Naive thymus-derived CD4-positive, alpha-beta T cell (primary cell): ENCODE measurements at regions of chr2 and their contacts with region 1.

Region 1: DNA sequence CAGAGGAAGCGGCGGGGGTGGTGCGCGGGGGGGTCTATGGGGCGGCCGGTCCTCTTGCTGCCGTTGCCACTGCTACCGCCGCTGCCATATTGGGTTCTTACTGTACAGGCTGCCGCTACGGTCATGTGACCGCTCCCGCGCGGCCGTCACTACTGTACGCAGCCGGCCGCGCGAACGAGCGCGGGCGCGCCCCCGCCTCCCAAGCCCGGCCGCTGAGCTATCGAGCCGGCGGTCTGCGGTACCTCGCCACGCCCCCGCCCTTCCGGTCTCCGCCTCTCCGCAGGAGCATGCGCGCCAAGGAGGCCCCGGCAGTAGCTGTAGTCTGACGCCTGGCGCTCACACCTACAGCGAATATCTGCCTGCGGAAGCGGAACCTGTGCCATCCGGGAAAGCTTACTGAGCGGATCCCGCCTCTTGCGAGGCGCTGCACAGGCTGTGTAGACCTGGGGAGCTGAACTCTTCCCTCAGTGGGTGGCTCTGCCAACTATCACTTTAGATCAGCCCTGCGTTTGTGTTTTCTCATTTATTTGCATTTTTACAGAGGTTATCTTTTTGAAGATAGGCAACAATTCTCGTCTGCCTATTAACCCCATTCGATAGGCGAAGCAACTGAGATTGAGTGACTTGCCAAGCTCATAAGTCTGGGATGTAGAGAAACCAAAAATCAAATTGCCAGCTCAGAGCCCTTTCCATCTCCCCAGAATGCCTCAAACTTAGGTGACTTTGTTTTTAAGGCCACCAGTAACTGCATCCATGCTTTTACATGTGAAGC is at the start of gene ASXL2:
- DNase-seq: peak; percentile 95 to 98 (median 98)
- ATAC-seq: peak; percentile 95
- H3K4me3 ChIP-seq: peak within 1 kb of the TSS; percentile 94
- H3K4me3 Mint-ChIP-seq: peak within 1 kb of the TSS; percentile 91 to 98 (median 97)
- H3K27ac ChIP-seq: peak within 1 kb of the TSS; percentile 99
- H3K27ac Mint-ChIP-seq: peak within 1 kb of the TSS; percentile 93 to 99 (median 99)
- H3K4me1 ChIP-seq: peaks cover 16 to 21% of the 10 kb centered on the region in 2 donors
- H3K4me1 Mint-ChIP-seq: peaks cover 31 to 50% (median 40%) of the 10 kb centered on the region in 7 donors
- H3K27me3 ChIP-seq: no peaks in the 10 kb centered on the region
- H3K27me3 Mint-ChIP-seq: no peaks in the 10 kb centered on the region
- total RNA-seq, gene ASXL2: 29.2 to 62.1 (median 48.5) TPM

Region 2: GRCh38 chr2:24971536-24972314 is 906.8 kb before region 1 on chr2 and contains the start of gene DNAJC27:
- CTCF ChIA-PET with region 1: no interaction called
- POLR2A ChIA-PET with region 1: interaction called, 4 read pairs
- intact Hi-C with region 1: loop called in 1 of 2 experiments (anchors 1 kb)
- DNase-seq: peak; percentile 97 to 99 (median 99)
- ATAC-seq: peak; percentile 93
- H3K4me3 ChIP-seq: peak within 1 kb of the TSS; percentile 90
- H3K4me3 Mint-ChIP-seq: peak within 1 kb of the TSS; percentile 96 to 99 (median 98)
- H3K27ac ChIP-seq: peak within 1 kb of the TSS; percentile 98
- H3K27ac Mint-ChIP-seq: peak within 1 kb of the TSS; percentile 99 to 100 (median 100)
- H3K4me1 ChIP-seq: peaks cover 0 to 17% of the 10 kb centered on the region in 2 donors
- H3K4me1 Mint-ChIP-seq: peaks cover 6 to 46% (median 30%) of the 10 kb centered on the region in 7 donors
- H3K27me3 ChIP-seq: no peaks in the 10 kb centered on the region
- H3K27me3 Mint-ChIP-seq: no peaks in the 10 kb centered on the region
- total RNA-seq, gene DNAJC27: 5.9 to 22.0 (median 18.1) TPM

Region 3: DNA sequence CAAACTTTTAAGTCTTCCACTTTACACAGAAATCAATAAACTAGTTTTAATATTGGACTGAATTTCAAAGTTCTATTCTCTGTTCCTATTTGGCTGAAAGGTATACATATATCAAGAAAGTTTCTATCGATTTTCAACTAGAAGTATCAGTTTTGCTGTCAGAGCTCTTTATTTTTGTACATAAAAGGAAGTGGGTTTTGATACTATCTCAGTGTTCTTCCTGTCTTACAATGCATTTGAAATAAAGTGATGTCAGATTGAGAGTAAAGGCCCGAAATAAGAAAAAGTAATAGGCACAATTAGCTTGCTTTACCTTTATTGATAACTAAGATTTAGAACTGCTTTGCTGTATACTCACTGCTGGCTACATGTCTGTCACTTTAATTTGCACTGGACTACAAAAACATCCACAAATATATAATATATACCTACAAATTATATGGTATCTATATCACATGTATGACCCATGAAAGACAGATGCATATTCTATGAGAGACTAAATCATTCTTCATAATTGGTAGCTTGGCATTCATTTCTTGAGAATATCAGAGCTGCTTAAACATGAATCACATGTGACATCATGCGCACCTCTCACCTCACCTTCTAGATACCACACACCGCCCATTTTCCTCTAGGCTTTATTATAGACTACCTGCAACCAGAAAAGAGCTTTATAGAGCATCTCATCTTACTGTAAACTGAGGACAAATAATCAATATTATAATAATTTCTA is 83.8 kb before region 1 on chr2:
- CTCF ChIA-PET with region 1: no interaction called
- POLR2A ChIA-PET with region 1: interaction called, 5 read pairs
- intact Hi-C with region 1: loop called (anchors 1 kb)
- DNase-seq: peak in 6 of 9 donors; percentile 33 to 61 (median 47)
- ATAC-seq: peak; percentile 90
- H3K4me3 ChIP-seq: peak overlapping the region; percentile 23
- H3K4me3 Mint-ChIP-seq: peak overlapping the region; percentile 68 to 92 (median 86)
- H3K27ac ChIP-seq: peak overlapping the region; percentile 63
- H3K27ac Mint-ChIP-seq: peak overlapping the region; percentile 87 to 97 (median 95)
- H3K4me1 ChIP-seq: peaks cover 43 to 51% of the 10 kb centered on the region in 2 donors
- H3K4me1 Mint-ChIP-seq: peaks cover 48 to 95% (median 86%) of the 10 kb centered on the region in 7 donors
- H3K27me3 ChIP-seq: no peaks in the 10 kb centered on the region
- H3K27me3 Mint-ChIP-seq: no peaks in the 10 kb centered on the region

Region 4: GRCh38 chr2:25951071-25951547 is 72.6 kb after region 1 on chr2:
- CTCF ChIA-PET with region 1: no interaction called
- POLR2A ChIA-PET with region 1: interaction called, 5 read pairs
- intact Hi-C with region 1: loop called in 1 of 2 experiments (anchors 2 kb)
- DNase-seq: peak; percentile 39 to 76 (median 57)
- ATAC-seq: peak; percentile 95
- H3K4me3 ChIP-seq: no peak overlapping the region
- H3K4me3 Mint-ChIP-seq: no peak overlapping the region
- H3K27ac ChIP-seq: no peak overlapping the region
- H3K27ac Mint-ChIP-seq: peak overlapping the region in 1 of 9 donors; percentile 18
- H3K4me1 ChIP-seq: no peaks in the 10 kb centered on the region
- H3K4me1 Mint-ChIP-seq: peaks cover 0 to 4% (median 0%) of the 10 kb centered on the region in 7 donors
- H3K27me3 ChIP-seq: no peaks in the 10 kb centered on the region
- H3K27me3 Mint-ChIP-seq: no peaks in the 10 kb centered on the region

Region 5: GRCh38 chr2:26196683-26197418 is 318.3 kb after region 1 on chr2:
- CTCF ChIA-PET with region 1: no interaction called
- POLR2A ChIA-PET with region 1: no interaction called
- intact Hi-C with region 1: no loop called
- DNase-seq: no peak
- ATAC-seq: peak; percentile 38
- H3K4me3 ChIP-seq: no peak overlapping the region
- H3K4me3 Mint-ChIP-seq: no peak overlapping the region
- H3K27ac ChIP-seq: no peak overlapping the region
- H3K27ac Mint-ChIP-seq: peak overlapping the region in 5 of 9 donors; percentile 26 to 71 (median 53)
- H3K4me1 ChIP-seq: no peaks in the 10 kb centered on the region
- H3K4me1 Mint-ChIP-seq: no peaks in the 10 kb centered on the region
- H3K27me3 ChIP-seq: no peaks in the 10 kb centered on the region
- H3K27me3 Mint-ChIP-seq: no peaks in the 10 kb centered on the region

Region 6: GRCh38 chr2:26244309-26245121 is 366.0 kb after region 1 on chr2 and contains the starts of genes HADHA and HADHB:
- CTCF ChIA-PET with region 1: no interaction called
- POLR2A ChIA-PET with region 1: no interaction called
- intact Hi-C with region 1: loop called in 1 of 2 experiments (anchors 1 kb)
- DNase-seq: peak; percentile 76 to 91 (median 87)
- ATAC-seq: peak; percentile 92
- H3K4me3 ChIP-seq: peak within 1 kb of the TSS; percentile 99
- H3K4me3 Mint-ChIP-seq: peak within 1 kb of the TSS; percentile 96 to 100 (median 99)
- H3K27ac ChIP-seq: peak within 1 kb of the TSS; percentile 96
- H3K27ac Mint-ChIP-seq: peak within 1 kb of the TSS; percentile 98 to 100 (median 99)
- H3K4me1 ChIP-seq: peaks cover 13 to 19% of the 10 kb centered on the region in 2 donors
- H3K4me1 Mint-ChIP-seq: peaks cover 47 to 73% (median 57%) of the 10 kb centered on the region in 7 donors
- H3K27me3 ChIP-seq: no peaks in the 10 kb centered on the region
- H3K27me3 Mint-ChIP-seq: no peaks in the 10 kb centered on the region
- total RNA-seq, gene HADHA: 83.8 to 111 (median 102) TPM
- total RNA-seq, gene HADHB: 38.1 to 77.5 (median 64.2) TPM

Region 7: GRCh38 chr2:27071277-27071989 is 1192.9 kb after region 1 on chr2 and contains the start of gene OST4:
- CTCF ChIA-PET with region 1: no interaction called
- POLR2A ChIA-PET with region 1: no interaction called
- intact Hi-C with region 1: loop called in 1 of 2 experiments (anchors 5 kb)
- DNase-seq: peak; percentile 81 to 97 (median 87)
- ATAC-seq: peak; percentile 96
- H3K4me3 ChIP-seq: peak within 1 kb of the TSS; percentile 83
- H3K4me3 Mint-ChIP-seq: peak within 1 kb of the TSS; percentile 96 to 99 (median 97)
- H3K27ac ChIP-seq: peak within 1 kb of the TSS; percentile 97
- H3K27ac Mint-ChIP-seq: peak within 1 kb of the TSS; percentile 93 to 98 (median 97)
- H3K4me1 ChIP-seq: peaks cover 29 to 41% of the 10 kb centered on the region in 2 donors
- H3K4me1 Mint-ChIP-seq: peaks cover 57 to 86% (median 76%) of the 10 kb centered on the region in 7 donors
- H3K27me3 ChIP-seq: no peaks in the 10 kb centered on the region
- H3K27me3 Mint-ChIP-seq: no peaks in the 10 kb centered on the region
- total RNA-seq, gene OST4: 241 to 398 (median 263) TPM